GM12878 (cell line): ENCODE measurements at regions of chr19 and their contacts with region 1.

Region 1: GRCh38 chr19:34193439-34193838 is 21.1 kb downstream of the LSM14A start:
- DNase-seq: no peak
- ATAC-seq: no peak
- H3K4me3 ChIP-seq: no peak overlapping the region
- H3K27ac ChIP-seq: peak overlapping the region; percentile 37
- H3K4me1 ChIP-seq: peaks cover 7% of the 10 kb centered on the region
- H3K27me3 ChIP-seq: no peaks in the 10 kb centered on the region
- CTCF ChIP-seq: no peak
- EP300 ChIP-seq: no peak
- POLR2A ChIP-seq: no peak
- RAD21 ChIP-seq: no peak

Region 2: GRCh38 chr19:34120846-34121639 is 72.4 kb before region 1 on chr19:
- CTCF ChIA-PET with region 1: no interaction called
- POLR2A ChIA-PET with region 1: no interaction called
- RAD21 ChIA-PET with region 1: no interaction called
- SMC1A ChIA-PET with region 1: no interaction called
- in situ Hi-C with region 1: no loop called
- intact Hi-C with region 1: no loop called
- DNase-seq: no peak
- ATAC-seq: peak; percentile 74
- H3K4me3 ChIP-seq: no peak overlapping the region
- H3K27ac ChIP-seq: no peak overlapping the region
- H3K4me1 ChIP-seq: no peaks in the 10 kb centered on the region
- H3K27me3 ChIP-seq: no peaks in the 10 kb centered on the region; a peak in 1 of 4 replicates
- CTCF ChIP-seq: peak; percentile 72 to 79 (median 78)
- EP300 ChIP-seq: no peak
- POLR2A ChIP-seq: no peak
- RAD21 ChIP-seq: peak; percentile 63

Region 3: DNA sequence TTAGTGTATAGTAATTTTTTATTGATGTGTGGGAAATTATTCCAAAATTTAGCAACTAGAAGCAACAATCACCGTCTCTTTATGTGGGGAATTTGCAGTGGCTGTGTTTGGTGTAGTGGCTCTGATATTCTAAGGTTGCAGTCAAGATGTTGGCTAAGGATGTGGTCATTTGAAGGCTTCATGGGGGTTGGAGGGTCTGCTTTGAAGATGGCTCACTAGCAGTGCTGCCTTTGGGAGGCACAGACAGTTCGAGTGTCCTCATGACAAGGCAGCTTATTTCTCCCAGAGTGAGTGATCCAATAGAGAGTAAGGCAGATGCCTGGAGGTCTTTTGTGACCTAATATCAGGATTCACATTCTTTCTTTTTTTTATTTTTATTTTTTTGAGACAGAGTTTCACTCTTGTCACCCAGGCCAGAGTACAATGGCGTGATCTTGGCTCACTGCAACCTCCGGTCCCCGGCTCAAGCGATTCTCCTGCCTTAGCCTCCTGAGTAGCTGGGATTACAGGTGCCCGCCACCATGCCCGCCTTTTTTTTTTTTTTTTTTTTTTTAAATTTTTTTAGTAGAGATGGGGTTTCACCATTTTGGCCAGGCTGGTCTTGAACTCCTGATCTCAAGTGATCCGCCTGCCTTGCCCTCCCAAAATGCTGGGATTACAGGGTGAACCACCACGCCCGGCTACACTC is 180.3 kb after region 1 on chr19:
- CTCF ChIA-PET with region 1: no interaction called
- POLR2A ChIA-PET with region 1: interaction called, 13 read pairs
- RAD21 ChIA-PET with region 1: no interaction called
- SMC1A ChIA-PET with region 1: no interaction called
- in situ Hi-C with region 1: no loop called
- intact Hi-C with region 1: no loop called
- DNase-seq: no peak
- ATAC-seq: no peak
- H3K4me3 ChIP-seq: no peak overlapping the region
- H3K27ac ChIP-seq: no peak overlapping the region
- H3K4me1 ChIP-seq: no peaks in the 10 kb centered on the region
- H3K27me3 ChIP-seq: no peaks in the 10 kb centered on the region
- CTCF ChIP-seq: no peak
- EP300 ChIP-seq: no peak
- POLR2A ChIP-seq: no peak
- RAD21 ChIP-seq: no peak

Region 4: GRCh38 chr19:34493101-34493544 is 299.7 kb after region 1 on chr19:
- CTCF ChIA-PET with region 1: no interaction called
- POLR2A ChIA-PET with region 1: no interaction called
- RAD21 ChIA-PET with region 1: no interaction called
- SMC1A ChIA-PET with region 1: no interaction called
- in situ Hi-C with region 1: no loop called
- intact Hi-C with region 1: no loop called
- DNase-seq: no peak
- ATAC-seq: no peak
- H3K4me3 ChIP-seq: no peak overlapping the region
- H3K27ac ChIP-seq: no peak overlapping the region
- H3K4me1 ChIP-seq: no peaks in the 10 kb centered on the region
- H3K27me3 ChIP-seq: no peaks in the 10 kb centered on the region
- CTCF ChIP-seq: no peak
- EP300 ChIP-seq: no peak
- POLR2A ChIP-seq: no peak
- RAD21 ChIP-seq: no peak